Left lung (tissue), 14 donors: ENCODE measurements at regions of chr12 and their contacts with region 1.

Region 1: DNA sequence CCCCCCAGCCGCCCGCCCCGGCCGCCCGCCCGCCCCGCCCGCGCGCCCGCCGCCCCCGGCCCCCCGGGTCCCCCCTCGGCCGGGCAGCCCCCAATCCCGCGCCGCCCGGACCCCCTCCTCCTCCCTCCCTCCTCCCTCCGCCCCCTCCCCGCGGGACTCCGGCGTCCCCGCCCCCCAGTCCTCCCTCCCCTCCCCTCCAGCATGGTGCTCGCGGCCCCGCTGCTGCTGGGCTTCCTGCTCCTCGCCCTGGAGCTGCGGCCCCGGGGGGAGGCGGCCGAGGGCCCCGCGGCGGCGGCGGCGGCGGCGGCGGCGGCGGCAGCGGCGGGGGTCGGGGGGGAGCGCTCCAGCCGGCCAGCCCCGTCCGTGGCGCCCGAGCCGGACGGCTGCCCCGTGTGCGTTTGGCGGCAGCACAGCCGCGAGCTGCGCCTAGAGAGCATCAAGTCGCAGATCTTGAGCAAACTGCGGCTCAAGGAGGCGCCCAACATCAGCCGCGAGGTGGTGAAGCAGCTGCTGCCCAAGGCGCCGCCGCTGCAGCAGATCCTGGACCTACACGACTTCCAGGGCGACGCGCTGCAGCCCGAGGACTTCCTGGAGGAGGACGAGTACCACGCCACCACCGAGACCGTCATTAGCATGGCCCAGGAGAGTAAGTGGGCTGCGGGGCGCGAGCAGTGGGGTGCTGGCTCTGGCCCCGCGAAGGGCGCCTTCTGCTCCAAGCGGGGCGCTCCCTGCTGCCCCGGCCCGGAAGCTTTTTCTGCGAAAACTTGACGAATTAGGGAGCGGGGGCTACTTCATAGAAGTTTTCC is at the start of gene GDF11:
- DNase-seq: peak; percentile 57 to 88 (median 76)
- ATAC-seq: peak; percentile 58
- H3K4me3 ChIP-seq: peak within 1 kb of the TSS; percentile 50 to 65
- H3K27ac ChIP-seq: peak within 1 kb of the TSS; percentile 60 to 73
- H3K4me1 ChIP-seq: peaks cover 4 to 24% of the 10 kb centered on the region in 2 donors
- H3K27me3 ChIP-seq: peaks cover 0 to 29% of the 10 kb centered on the region in 2 donors
- CTCF ChIP-seq: no peak
- polyA plus RNA-seq, gene GDF11: 14.2 to 20.2 (median 17.0) TPM

Region 2: DNA sequence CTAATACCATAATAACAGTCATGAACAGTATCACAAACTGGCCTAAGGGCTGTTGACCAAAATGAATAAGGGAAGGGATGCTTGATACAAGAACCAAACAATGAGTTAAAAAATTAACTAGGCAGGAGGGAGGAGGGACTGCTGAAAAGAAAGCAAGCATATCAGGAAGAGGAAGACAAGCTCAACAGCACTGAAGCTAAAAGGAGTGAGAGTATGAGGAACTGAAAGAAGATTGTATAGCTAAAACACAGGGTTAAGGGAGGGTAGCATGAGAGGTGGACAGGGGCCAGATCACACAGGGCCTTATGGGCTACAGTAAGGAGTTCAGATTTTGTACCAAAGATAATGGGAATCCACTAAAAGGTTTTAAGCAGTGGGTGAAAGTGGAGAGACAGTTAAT is 69.7 kb before region 1 on chr12:
- intact Hi-C with region 1: no loop called
- DNase-seq: no peak
- ATAC-seq: peak; percentile 55
- H3K4me3 ChIP-seq: no peak overlapping the region
- H3K27ac ChIP-seq: peak overlapping the region in 1 of 2 donors; percentile 66
- H3K4me1 ChIP-seq: peaks cover 0 to 21% of the 10 kb centered on the region in 2 donors
- H3K27me3 ChIP-seq: no peaks in the 10 kb centered on the region
- CTCF ChIP-seq: no peak

Region 3: GRCh38 chr12:55806982-55807381 is 63.7 kb after region 1 on chr12:
- intact Hi-C with region 1: loop called in 1 of 2 experiments (anchors 10 kb)
- DNase-seq: no peak
- ATAC-seq: no peak
- H3K4me3 ChIP-seq: no peak overlapping the region
- H3K27ac ChIP-seq: no peak overlapping the region
- H3K4me1 ChIP-seq: peaks cover 0 to 16% of the 10 kb centered on the region in 2 donors
- H3K27me3 ChIP-seq: no peaks in the 10 kb centered on the region
- CTCF ChIP-seq: no peak

Region 4: DNA sequence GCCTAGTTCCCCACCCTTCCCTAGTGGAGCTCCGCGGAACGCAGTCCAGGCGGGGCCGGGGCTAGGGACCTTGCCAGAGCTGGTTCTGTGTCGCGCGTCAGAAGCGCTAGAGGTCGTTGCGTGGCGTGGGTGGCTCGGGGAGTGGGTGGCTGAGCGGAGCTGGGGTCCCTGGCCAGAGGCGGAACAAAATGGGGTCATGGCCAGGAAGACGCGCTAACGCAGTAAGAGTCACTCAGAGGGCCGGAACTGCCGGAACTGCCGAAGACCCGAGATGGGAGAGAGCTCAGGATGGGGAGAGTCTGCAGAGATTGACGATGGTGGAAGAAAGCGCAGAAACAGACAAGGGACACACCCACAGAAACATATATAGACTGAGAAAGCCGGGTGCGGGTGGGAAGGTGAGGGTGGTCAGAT is 192.4 kb after region 1 on chr12:
- intact Hi-C with region 1: loop called in 1 of 2 experiments (anchors 5 kb)
- DNase-seq: peak in 2 of 4 donors; percentile 33 to 77
- ATAC-seq: no peak
- H3K4me3 ChIP-seq: no peak overlapping the region
- H3K27ac ChIP-seq: peak overlapping the region; percentile 26 to 66
- H3K4me1 ChIP-seq: peaks cover 14 to 41% of the 10 kb centered on the region in 2 donors
- H3K27me3 ChIP-seq: no peaks in the 10 kb centered on the region
- CTCF ChIP-seq: no peak